PC-9 (cell line): ENCODE measurements at regions of chr17 and their contacts with region 1.

Region 1: DNA sequence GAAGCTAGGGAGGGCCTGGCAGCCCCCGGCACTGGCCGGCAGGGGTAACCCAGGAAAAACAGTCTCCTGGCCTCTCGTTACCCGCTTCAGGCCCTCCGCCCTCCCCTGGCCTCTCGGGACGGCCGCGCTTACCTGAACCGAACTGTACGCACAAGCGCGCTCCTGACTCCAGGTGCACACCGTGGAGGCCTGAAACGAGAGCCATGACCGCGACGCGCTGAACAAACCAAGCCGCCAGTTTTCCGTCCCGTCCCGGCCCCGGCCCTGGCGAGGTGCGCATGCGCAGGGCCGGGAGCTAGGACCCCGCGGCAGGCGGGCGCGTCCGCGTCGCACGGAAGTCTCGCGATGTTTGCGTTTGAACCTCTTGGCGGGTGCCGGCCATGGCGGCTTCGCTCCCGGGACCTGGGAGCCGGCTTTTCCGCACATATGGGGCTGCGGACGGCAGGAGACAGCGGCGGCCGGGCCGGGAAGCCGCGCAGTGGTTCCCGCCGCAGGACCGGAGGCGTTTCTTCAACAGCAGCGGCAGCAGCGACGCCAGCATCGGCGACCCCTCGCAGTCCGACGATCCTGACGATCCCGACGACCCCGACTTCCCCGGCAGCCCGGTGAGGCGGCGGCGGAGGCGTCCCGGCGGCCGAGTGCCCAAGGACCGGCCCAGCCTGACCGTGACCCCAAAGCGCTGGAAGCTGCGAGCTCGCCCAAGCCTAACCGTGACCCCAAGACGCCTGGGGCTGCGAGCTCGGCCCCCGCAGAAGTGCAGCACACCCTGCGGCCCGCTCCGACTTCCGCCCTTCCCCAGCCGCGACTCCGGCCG is at the start of gene HASPIN:
- DNase-seq: peak; percentile 77 to 91
- H3K4me3 ChIP-seq: peak within 1 kb of the TSS; percentile 76
- H3K27ac ChIP-seq: peak within 1 kb of the TSS; percentile 38
- H3K4me1 ChIP-seq: peaks cover 55% of the 10 kb centered on the region
- H3K27me3 ChIP-seq: no peaks in the 10 kb centered on the region
- CTCF ChIP-seq: peak; percentile 44; the same call in 1 of the 2 replicates
- total RNA-seq, gene HASPIN: 25.1 and 26.8 TPM in 2 replicates

Region 2: DNA sequence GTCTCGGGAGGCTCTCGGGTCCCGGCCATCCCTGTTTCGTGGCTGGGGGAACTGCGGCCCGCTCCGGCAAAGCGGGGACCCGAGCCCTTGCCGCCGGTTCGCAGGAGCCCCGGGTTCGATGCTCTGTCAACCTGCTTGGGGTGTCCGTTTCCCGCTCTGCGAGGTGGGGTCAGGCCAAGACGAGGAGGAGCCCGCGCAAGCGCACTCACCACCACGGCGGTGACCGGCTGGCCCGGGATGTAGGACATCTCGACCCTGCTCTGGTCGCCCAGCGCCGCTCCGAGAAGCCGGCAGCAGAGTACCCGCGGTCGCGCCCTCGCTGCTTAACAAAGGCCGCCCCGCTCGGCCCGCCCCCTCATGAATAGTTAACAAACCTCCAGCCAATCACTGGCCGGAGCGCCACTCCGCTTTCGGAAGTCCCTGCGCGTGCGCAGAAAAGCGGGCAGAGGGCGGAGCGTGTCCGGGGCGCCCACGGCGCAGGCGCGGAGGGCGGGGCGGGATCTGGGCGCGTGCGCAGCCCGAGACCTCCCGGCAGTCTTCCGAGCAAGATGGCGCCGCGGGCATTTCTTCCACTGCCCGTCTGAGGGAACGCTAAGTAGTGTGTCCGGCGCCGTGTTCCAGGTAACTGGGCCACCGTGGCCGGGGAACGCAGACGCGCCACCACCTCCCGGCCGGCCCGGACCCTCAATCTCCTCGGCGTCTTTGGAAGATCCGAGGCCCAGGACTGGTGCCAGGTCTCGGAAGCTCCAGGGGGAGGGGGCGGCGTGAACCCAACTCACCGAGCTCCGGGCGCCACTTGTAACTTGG is 55.3 kb before region 1 on chr17 and contains the starts of genes EMC6 and TAX1BP3:
- CTCF ChIA-PET with region 1: no interaction called
- POLR2A ChIA-PET with region 1: interaction called, 5 read pairs
- intact Hi-C with region 1: loop called (anchors 5 kb)
- DNase-seq: peak; percentile 92 to 100
- H3K4me3 ChIP-seq: peak within 1 kb of the TSS; percentile 95
- H3K27ac ChIP-seq: peak within 1 kb of the TSS; percentile 88
- H3K4me1 ChIP-seq: peaks cover 25% of the 10 kb centered on the region
- H3K27me3 ChIP-seq: no peaks in the 10 kb centered on the region
- CTCF ChIP-seq: no peak; the same call in 1 of the 2 replicates
- total RNA-seq, gene EMC6: 89.6 and 89.9 TPM in 2 replicates
- total RNA-seq, gene TAX1BP3: 147 and 168 TPM in 2 replicates

Region 3: DNA sequence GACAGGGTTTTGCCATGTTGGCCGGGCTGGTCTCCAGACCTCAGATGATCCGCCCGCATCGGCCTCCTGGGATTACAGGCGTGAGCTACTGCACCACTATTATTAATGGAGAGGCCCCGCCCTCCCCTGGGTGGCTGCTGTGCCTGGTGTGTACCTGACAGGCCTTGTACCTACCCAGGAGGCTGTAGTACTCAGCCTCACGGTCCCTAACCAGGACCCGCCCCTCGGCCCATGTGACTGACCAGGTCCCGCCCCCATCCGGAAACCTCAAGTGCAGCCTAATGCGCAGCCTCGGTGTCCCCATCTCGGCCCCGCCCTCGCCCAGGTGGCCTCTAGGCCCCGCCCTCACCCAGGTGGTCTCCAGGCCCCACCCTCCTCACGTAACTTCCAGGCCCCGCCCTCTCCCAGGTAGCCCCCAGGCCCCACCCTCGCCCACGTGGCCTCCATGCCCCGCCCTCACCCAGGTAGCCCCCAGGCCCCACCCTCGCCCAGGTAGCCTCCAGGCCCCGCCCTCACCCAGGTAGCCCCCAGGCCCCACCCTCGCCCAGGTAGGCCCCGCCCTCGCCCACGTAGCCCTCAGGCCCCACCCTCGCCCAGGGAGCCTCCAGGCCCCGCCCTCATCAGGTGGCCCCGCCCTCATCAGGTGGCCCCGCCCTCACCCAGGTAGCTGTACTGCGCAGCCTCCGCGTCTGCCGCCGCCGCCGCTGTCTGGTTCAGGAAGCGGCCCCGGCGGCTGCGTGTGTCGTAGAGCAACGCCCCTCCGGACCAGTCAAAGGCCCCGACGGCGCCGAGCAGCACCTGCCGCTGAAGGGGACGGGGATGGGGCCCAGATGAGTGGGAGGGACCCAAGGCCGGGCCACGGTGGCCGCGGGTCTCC is 30.9 kb after region 1 on chr17:
- CTCF ChIA-PET with region 1: no interaction called
- POLR2A ChIA-PET with region 1: interaction called, 10 read pairs
- intact Hi-C with region 1: no loop called
- DNase-seq: peak; percentile 94 to 100
- H3K4me3 ChIP-seq: peak overlapping the region; percentile 94
- H3K27ac ChIP-seq: peak overlapping the region; percentile 43
- H3K4me1 ChIP-seq: peaks cover 11% of the 10 kb centered on the region
- H3K27me3 ChIP-seq: no peaks in the 10 kb centered on the region
- CTCF ChIP-seq: no peak

Region 4: GRCh38 chr17:3886776-3887175 is 163.0 kb after region 1 on chr17:
- CTCF ChIA-PET with region 1: no interaction called
- POLR2A ChIA-PET with region 1: interaction called, 27 read pairs
- intact Hi-C with region 1: no loop called
- DNase-seq: no peak
- H3K4me3 ChIP-seq: no peak overlapping the region
- H3K27ac ChIP-seq: no peak overlapping the region
- H3K4me1 ChIP-seq: peaks cover 61% of the 10 kb centered on the region
- H3K27me3 ChIP-seq: no peaks in the 10 kb centered on the region
- CTCF ChIP-seq: no peak